ENCODE measurements at regions of chr11 and their contacts with region 1.

Region 1: GRCh38 chr11:67630228-67630942 is 648 bp upstream of the NUDT8 start:
- DNase-seq: peak; percentile 90 to 98 (median 95)
- H3K4me3 ChIP-seq: peak overlapping the region; percentile 59 to 100 (median 79)
- H3K27ac ChIP-seq: peak overlapping the region in 58 of 59 donors; percentile 43 to 93 (median 87)
- H3K27me3 ChIP-seq: no peaks in the 10 kb centered on the region
- CTCF ChIP-seq: peak in 54 of 56 donors; percentile 40 to 83 (median 66)

Region 2: DNA sequence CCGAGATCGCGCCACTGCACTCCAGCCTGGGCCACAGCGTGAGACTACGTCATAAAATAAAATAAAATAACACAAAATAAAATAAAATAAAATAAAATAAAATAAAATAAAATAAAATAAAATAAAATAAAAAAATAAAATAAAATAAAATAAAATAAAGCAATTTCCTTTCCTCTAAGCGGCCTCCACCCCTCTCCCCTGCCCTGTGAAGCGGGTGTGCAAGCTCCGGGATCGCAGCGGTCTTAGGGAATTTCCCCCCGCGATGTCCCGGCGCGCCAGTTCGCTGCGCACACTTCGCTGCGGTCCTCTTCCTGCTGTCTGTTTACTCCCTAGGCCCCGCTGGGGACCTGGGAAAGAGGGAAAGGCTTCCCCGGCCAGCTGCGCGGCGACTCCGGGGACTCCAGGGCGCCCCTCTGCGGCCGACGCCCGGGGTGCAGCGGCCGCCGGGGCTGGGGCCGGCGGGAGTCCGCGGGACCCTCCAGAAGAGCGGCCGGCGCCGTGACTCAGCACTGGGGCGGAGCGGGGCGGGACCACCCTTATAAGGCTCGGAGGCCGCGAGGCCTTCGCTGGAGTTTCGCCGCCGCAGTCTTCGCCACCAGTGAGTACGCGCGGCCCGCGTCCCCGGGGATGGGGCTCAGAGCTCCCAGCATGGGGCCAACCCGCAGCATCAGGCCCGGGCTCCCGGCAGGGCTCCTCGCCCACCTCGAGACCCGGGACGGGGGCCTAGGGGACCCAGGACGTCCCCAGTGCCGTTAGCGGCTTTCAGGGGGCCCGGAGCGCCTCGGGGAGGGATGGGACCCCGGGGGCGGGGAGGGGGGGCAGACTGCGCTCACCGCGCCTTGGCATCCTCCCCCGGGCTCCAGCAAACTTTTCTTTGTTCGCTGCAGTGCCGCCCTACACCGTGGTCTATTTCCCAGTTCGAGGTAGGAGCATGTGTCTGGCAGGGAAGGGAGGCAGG is 46.9 kb before region 1 on chr11 and contains the start of gene GSTP1:
- intact Hi-C with region 1: loop called in 1 of 2 experiments (anchors 5 kb)
- DNase-seq: peak; percentile 76 to 95 (median 88)
- H3K4me3 ChIP-seq: peak within 1 kb of the TSS; percentile 55 to 89 (median 79)
- H3K27ac ChIP-seq: peak within 1 kb of the TSS; percentile 79 to 99 (median 96)
- H3K27me3 ChIP-seq: no peaks in the 10 kb centered on the region
- CTCF ChIP-seq: peak; percentile 27 to 88 (median 74)
- total RNA-seq, gene GSTP1: 145 to 281 (median 207) TPM

Region 3: GRCh38 chr11:67606492-67607201 is 23.7 kb before region 1 on chr11 and contains the start of gene NDUFV1:
- intact Hi-C with region 1: loop called in 1 of 2 experiments (anchors 1 kb)
- DNase-seq: peak; percentile 92 to 99 (median 97)
- H3K4me3 ChIP-seq: peak within 1 kb of the TSS; percentile 71 to 100 (median 98)
- H3K27ac ChIP-seq: peak within 1 kb of the TSS in 58 of 59 donors; percentile 2 to 96 (median 83)
- H3K27me3 ChIP-seq: no peaks in the 10 kb centered on the region
- CTCF ChIP-seq: peak; percentile 21 to 96 (median 83)
- total RNA-seq, gene NDUFV1: 176 to 398 (median 251) TPM

Region 4: DNA sequence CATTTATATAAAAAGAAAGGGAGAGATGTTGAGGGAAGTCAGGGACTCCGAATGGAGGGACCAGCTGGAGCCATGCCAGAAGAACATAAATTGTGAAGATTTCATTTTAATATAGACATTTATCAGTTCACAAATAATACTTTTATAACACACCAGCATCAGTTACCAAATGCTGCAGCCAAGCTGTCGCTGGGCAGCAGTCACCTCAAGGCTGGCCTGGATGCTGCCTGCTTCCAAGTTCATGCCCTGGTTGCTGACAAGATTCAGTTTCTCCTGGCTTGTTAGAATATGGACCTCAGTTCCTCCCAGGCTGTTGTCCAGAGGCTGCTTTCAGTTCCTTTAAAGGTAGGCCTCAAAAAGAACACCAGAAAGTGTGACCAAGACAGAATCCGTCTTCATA is 74.9 kb after region 1 on chr11:
- intact Hi-C with region 1: loop called in 1 of 2 experiments (anchors 10 kb)
- DNase-seq: no peak
- H3K4me3 ChIP-seq: no peak overlapping the region
- H3K27ac ChIP-seq: no peak overlapping the region
- H3K27me3 ChIP-seq: peaks cover 0 to 7% (median 0%) of the 10 kb centered on the region in 45 donors
- CTCF ChIP-seq: no peak

Measured in dorsolateral prefrontal cortex (tissue), 120 donors.